ENCODE measurements at regions of chr19 and their contacts with region 1.

Region 1: DNA sequence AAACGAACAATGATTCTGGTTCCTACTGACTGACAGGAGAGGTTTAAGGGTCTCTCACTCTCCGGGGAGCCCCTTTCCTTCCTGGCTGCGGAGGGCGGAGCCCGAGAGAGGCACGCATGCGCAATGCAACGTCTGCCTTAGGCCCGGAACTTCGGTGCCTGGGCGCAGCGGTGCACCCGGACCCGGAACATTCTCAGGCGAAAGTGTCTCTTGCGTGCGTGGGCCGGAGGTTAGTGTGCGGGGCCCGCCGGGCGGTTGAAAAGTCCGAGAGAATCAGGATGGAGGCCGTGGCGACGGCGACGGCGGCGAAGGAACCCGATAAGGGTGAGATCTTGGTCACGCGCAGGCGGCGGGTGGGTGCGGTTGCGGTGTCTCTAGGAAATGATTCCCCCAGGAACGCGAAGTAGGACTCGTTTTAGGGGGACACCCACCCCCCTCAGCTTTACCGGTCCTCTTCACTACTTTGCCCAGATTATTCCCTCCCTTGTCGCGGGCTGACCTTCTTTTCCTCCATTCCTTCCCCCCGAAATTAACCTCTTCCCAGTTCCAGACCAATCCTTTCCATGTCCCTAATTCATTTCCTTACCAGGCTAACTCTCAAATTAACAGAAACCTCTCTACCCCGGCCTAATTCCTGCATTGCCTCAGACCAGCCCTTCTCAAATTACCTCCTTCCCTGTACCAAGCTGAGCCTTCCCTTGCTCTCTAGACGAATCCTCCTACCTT is at the start of gene CCDC97:
- DNase-seq: peak; percentile 68
- ATAC-seq: peak; percentile 81
- H3K4me3 ChIP-seq: peak within 1 kb of the TSS; percentile 98
- H3K27ac ChIP-seq: peak within 1 kb of the TSS; percentile 97
- H3K4me1 ChIP-seq: peaks cover 35% of the 10 kb centered on the region
- H3K27me3 ChIP-seq: no peaks in the 10 kb centered on the region
- CTCF ChIP-seq: no peak
- EP300 ChIP-seq: peak in 1 of 2 experiments; percentile 46; a peak in 1 of 4 replicates
- POLR2A ChIP-seq: peak; percentile 93
- RAD21 ChIP-seq: no peak
- polyA plus RNA-seq, gene CCDC97: 1.8 to 2.4 TPM

Region 2: GRCh38 chr19:41206926-41207750 is 103.1 kb before region 1 on chr19:
- CTCF ChIA-PET with region 1: interaction called, 36 read pairs
- POLR2A ChIA-PET with region 1: interaction called, 7 read pairs
- RAD21 ChIA-PET with region 1: interaction called, 20 read pairs
- SMC1A ChIA-PET with region 1: interaction called, 17 read pairs
- in situ Hi-C with region 1: loop called (anchors 5 kb)
- intact Hi-C with region 1: loop called (anchors 1 kb)
- DNase-seq: no peak
- ATAC-seq: no peak
- H3K4me3 ChIP-seq: no peak overlapping the region
- H3K27ac ChIP-seq: no peak overlapping the region
- H3K4me1 ChIP-seq: no peaks in the 10 kb centered on the region
- H3K27me3 ChIP-seq: no peaks in the 10 kb centered on the region
- CTCF ChIP-seq: no peak
- EP300 ChIP-seq: no peak
- POLR2A ChIP-seq: no peak
- RAD21 ChIP-seq: no peak

Region 3: GRCh38 chr19:41298348-41298964 is 11.7 kb before region 1 on chr19:
- CTCF ChIA-PET with region 1: interaction called, 50 read pairs
- POLR2A ChIA-PET with region 1: interaction called, 4 read pairs
- RAD21 ChIA-PET with region 1: interaction called, 23 read pairs
- SMC1A ChIA-PET with region 1: interaction called, 36 read pairs
- in situ Hi-C with region 1: no loop called
- intact Hi-C with region 1: no loop called
- DNase-seq: no peak
- ATAC-seq: peak; percentile 55
- H3K4me3 ChIP-seq: peak overlapping the region; percentile 1; the same call in 1 of the 2 replicates
- H3K27ac ChIP-seq: peak overlapping the region; percentile 95
- H3K4me1 ChIP-seq: peaks cover 61% of the 10 kb centered on the region
- H3K27me3 ChIP-seq: no peaks in the 10 kb centered on the region
- CTCF ChIP-seq: no peak
- EP300 ChIP-seq: peak in 1 of 2 experiments; percentile 75; a peak in 2 of 4 replicates
- POLR2A ChIP-seq: no peak; the same call in 1 of the 2 replicates
- RAD21 ChIP-seq: no peak

Region 4: DNA sequence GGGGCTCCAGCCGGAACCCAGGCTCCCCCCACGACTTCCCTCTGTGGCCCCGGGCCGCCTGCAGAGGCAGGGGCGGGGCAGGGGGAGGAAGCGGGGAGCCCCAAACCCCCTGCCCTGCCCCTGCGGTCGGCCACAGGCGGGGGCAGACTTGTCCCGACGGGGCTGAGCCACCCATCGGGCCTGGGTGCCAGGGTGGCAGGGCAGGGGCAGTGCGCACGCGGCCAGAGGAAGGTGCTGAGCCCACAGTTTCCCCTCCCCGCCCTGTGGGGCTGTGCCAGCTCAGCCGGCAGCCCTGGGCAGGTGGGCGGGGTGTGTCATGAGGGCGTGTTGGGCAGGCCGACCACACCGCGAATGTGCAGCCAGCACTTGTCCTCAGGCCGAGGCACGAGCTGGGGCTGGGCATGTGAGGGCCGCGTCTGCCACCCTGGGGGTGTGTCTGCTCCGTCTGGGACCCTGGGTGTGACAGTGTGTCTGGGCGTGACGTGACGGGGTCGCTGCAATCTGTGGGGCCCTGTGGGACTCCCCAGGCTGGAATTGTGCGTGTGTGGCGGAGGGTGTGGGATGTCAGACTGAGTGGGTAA is 17.5 kb after region 1 on chr19:
- CTCF ChIA-PET with region 1: interaction called, 10 read pairs
- POLR2A ChIA-PET with region 1: no interaction called
- RAD21 ChIA-PET with region 1: interaction called, 5 read pairs
- SMC1A ChIA-PET with region 1: interaction called, 4 read pairs
- in situ Hi-C with region 1: no loop called
- intact Hi-C with region 1: no loop called
- DNase-seq: no peak
- ATAC-seq: peak; percentile 86
- H3K4me3 ChIP-seq: peak overlapping the region; percentile 77
- H3K27ac ChIP-seq: peak overlapping the region; percentile 93
- H3K4me1 ChIP-seq: peaks cover 37% of the 10 kb centered on the region
- H3K27me3 ChIP-seq: no peaks in the 10 kb centered on the region
- CTCF ChIP-seq: no peak
- EP300 ChIP-seq: no peak
- POLR2A ChIP-seq: peak; percentile 78
- RAD21 ChIP-seq: no peak

Region 5: DNA sequence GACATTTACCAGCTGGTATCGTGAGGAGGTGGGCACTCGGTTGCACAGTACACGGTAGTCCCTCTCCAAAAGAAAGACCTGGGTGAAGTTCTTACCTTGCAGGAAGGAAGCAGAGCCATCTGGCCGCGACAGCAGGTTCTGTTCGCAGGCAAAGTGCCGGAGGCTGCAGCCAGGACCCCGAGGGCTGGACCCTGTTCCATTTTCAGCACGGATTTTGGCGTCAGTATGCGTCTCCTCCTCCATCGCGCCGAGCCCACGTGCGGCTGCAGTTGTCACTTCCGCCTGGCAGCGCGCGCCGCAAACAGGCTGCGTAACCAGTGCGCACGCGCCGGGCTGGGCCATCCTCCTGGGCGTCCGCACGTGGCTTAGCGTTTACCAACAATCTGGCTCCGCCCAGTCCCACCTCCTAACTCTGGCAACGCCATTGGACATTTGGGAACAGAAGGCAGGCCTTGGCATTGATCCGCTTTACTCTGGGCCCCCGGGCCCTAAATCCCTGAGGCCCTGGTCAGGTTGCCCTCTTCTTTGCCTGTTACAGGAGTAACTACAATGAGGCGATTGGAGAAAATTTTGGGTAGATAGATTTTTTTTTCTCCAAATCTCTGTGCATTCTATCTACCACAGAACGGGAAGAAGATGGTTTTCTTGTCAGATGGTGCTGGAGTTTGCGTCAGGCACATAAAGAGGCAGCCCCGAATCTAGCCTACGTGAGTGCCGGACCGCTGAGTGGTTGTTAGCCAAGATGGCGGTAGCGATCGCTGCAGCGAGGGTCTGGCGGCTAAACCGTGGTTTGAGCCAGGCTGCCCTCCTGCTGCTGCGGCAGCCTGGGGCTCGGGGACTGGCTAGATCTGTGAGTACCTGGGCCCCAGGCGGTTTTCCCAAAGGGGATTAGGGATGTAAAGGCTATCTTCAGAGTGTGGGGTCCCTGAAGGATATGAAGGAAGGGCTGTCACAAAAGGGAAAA is 87.2 kb after region 1 on chr19 and contains the starts of genes BCKDHA and EXOSC5:
- CTCF ChIA-PET with region 1: no interaction called
- POLR2A ChIA-PET with region 1: no interaction called
- RAD21 ChIA-PET with region 1: no interaction called
- SMC1A ChIA-PET with region 1: no interaction called
- in situ Hi-C with region 1: no loop called
- intact Hi-C with region 1: no loop called
- DNase-seq: peak; percentile 99
- ATAC-seq: peak; percentile 94
- H3K4me3 ChIP-seq: peak within 1 kb of the TSS; percentile 80
- H3K27ac ChIP-seq: peak within 1 kb of the TSS; percentile 99
- H3K4me1 ChIP-seq: peaks cover 21% of the 10 kb centered on the region
- H3K27me3 ChIP-seq: no peaks in the 10 kb centered on the region
- CTCF ChIP-seq: no peak
- EP300 ChIP-seq: no peak
- POLR2A ChIP-seq: peak; percentile 78
- RAD21 ChIP-seq: no peak
- polyA plus RNA-seq, gene BCKDHA: 9.9 to 28.7 TPM
- polyA plus RNA-seq, gene EXOSC5: 20.6 to 25.3 TPM